Activated CD8-positive, alpha-beta T cell treated with anti-CD3 and anti-CD28 coated beads, Interleukin-2, amount 10 ng/mL, durations not matched to agents 7 days and 5 days (primary cell): ENCODE measurements at regions of chr5 and their contacts with region 1.

Region 1: DNA sequence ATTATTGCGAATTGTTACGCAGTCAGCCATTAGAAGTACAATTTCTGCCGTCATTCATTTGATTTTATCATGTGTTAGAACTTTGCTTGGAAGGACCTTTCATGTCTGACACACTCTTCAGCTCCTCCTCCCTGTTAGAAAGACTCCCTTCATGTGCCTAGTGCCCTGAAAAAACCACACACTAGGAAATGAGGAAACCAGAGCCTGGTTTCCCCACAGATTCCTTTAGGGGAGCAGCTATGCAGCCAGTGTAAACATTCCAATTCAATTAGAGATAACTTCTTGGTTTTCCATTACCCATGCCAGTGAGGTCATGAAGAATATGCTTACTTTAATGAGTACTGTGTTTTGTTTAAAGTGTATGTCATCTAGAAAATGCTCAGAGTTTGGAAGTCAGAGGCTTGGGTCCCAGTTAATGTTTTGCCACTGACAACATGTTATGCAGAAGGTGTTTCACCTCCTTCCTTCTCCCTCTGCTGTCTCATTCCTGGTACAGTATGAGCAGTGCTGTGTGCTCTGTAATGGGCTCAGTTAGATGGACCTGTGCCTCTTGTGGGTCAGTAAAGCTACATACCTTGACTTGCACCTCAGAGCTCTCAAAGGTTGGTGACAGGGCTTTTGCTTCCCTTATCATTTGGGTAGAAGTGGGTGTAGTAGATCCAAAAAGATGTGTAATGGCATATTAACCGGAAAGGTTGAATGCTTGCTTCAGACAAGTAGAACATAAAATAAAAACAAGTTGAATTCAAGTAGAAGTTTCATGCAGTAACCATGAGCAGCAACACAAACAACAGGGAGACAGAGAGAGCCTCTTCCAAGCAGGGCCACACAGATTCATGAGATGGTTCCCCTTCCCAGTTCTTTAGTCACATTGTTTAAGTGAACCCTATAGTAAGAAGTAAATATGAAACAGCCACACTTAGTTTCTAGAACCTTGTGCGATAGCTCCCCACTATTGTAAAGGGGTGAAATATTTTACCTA is 52.6 kb upstream of the TNFAIP8 start:
- DNase-seq: peak; percentile 19
- ATAC-seq: peak; percentile 44
- H3K4me3 Mint-ChIP-seq: no peak overlapping the region
- H3K27ac Mint-ChIP-seq: peak overlapping the region; percentile 73
- H3K4me1 Mint-ChIP-seq: peaks cover 95% of the 10 kb centered on the region
- H3K27me3 Mint-ChIP-seq: no peaks in the 10 kb centered on the region

Region 2: DNA sequence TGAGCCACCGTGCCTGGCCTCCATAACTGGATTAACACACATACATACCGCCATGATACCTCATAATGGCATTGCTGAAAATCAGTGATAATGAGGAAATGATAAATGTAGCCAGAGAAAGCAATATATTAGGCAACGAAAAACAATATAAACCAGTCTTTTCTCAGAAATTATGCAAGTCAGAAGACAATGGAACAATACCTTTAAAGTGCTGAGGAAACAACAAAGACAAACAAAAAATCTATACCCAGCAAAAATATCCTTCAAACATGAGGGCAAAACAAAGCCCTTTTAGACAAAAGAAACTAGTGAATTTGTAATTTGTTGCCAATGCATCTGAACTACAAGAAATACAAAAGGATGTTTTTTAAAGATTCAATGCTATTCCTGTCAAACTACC is 45.6 kb before region 1 on chr5:
- CTCF ChIA-PET with region 1: no interaction called
- POLR2A ChIA-PET with region 1: no interaction called
- DNase-seq: no peak
- ATAC-seq: no peak
- H3K4me3 Mint-ChIP-seq: no peak overlapping the region
- H3K27ac Mint-ChIP-seq: no peak overlapping the region
- H3K4me1 Mint-ChIP-seq: peaks cover 11% of the 10 kb centered on the region
- H3K27me3 Mint-ChIP-seq: no peaks in the 10 kb centered on the region

Region 3: GRCh38 chr5:119290161-119290569 is 13.0 kb before region 1 on chr5:
- CTCF ChIA-PET with region 1: interaction called, 22 read pairs
- POLR2A ChIA-PET with region 1: interaction called, 8 read pairs
- DNase-seq: no peak
- ATAC-seq: peak; percentile 34
- H3K4me3 Mint-ChIP-seq: peak overlapping the region; percentile 48
- H3K27ac Mint-ChIP-seq: peak overlapping the region; percentile 94
- H3K4me1 Mint-ChIP-seq: peaks cover 90% of the 10 kb centered on the region
- H3K27me3 Mint-ChIP-seq: no peaks in the 10 kb centered on the region

Region 4: DNA sequence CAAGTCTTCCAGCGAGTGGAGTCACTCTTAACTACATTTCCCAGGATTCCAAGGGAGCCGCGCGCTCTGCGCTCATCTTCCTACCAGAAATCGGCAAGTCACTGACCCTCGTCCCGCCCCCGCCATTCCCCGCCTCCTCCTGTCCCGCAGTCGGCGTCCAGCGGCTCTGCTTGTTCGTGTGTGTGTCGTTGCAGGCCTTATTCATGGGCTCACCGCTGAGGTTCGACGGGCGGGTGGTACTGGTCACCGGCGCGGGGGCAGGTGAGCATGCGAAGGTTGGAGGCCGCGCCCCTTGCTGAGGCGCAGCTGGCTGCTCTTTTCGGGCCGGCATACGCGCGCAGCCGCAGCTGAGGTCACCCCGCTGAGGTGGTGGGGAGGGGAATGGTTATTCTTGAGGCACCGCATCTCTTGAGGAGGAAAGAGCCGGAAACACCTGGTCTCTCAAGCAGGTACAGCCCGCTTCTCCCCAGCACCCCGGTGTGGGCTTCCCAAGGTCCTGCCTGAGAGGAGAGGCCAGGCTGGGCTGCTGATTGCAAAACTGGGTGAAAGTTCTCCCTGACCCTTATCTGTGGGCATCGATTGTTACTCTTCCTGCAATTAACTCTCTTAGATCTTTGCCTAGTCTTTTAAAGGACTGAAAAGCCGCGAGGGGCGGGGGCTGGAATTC is 149.3 kb after region 1 on chr5 and contains the start of gene HSD17B4:
- CTCF ChIA-PET with region 1: no interaction called
- POLR2A ChIA-PET with region 1: no interaction called
- DNase-seq: peak; percentile 86
- ATAC-seq: peak; percentile 95
- H3K4me3 Mint-ChIP-seq: peak within 1 kb of the TSS; percentile 95
- H3K27ac Mint-ChIP-seq: peak within 1 kb of the TSS; percentile 82
- H3K4me1 Mint-ChIP-seq: peaks cover 19% of the 10 kb centered on the region
- H3K27me3 Mint-ChIP-seq: peaks cover 8% of the 10 kb centered on the region
- total RNA-seq, gene HSD17B4: 68.9 to 78.9 TPM